Heart left ventricle (tissue), 16 donors: ENCODE measurements at regions of chr20 and their contacts with region 1.

Region 1: DNA sequence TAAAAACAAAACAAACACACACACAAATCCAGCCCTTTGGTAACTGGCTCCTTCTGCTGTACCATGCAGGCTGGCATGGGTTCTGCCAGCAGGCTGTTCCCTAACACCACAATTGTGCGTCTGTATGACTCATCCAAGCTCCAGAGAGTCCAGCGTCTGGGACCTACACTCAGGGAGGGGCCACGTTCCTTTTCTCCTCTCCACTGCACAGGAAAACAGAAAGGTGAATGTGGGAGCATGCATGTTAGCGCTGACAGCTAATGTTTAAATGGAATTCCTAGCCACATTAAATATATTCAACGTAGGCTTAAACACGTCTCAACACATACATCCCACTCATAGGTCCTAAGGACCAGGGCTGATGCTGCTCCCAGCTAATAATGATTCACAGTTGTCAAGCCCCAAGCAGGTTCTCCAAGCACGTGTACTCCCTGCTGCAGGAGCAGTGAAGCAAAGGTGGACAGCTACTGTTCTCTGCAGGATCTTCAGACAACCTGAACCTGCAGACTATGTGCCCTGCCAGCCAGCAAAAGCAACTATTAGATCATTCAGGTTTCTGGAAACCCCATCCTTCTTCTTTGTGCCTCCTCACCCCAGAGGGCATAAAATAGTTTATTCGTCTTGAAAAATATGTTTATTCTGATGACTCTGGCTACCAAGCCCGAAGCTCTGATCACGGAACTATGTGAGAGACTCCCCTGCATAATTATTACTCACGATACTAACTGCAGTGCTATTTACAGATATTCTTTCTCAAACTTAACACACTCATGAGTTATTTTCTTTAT is 20.9 kb downstream of the MAP1LC3A start:
- DNase-seq: peak in 4 of 5 donors; percentile 51 to 82 (median 68)
- ATAC-seq: peak; percentile 85 to 92 (median 92)
- H3K4me3 ChIP-seq: no peak overlapping the region
- H3K27ac ChIP-seq: peak overlapping the region; percentile 44 to 93 (median 78)
- H3K4me1 ChIP-seq: peaks cover 0 to 59% (median 22%) of the 10 kb centered on the region in 12 donors
- H3K27me3 ChIP-seq: no peaks in the 10 kb centered on the region
- CTCF ChIP-seq: peak; percentile 23 to 68 (median 54)
- POLR2A ChIP-seq: no peak

Region 2: DNA sequence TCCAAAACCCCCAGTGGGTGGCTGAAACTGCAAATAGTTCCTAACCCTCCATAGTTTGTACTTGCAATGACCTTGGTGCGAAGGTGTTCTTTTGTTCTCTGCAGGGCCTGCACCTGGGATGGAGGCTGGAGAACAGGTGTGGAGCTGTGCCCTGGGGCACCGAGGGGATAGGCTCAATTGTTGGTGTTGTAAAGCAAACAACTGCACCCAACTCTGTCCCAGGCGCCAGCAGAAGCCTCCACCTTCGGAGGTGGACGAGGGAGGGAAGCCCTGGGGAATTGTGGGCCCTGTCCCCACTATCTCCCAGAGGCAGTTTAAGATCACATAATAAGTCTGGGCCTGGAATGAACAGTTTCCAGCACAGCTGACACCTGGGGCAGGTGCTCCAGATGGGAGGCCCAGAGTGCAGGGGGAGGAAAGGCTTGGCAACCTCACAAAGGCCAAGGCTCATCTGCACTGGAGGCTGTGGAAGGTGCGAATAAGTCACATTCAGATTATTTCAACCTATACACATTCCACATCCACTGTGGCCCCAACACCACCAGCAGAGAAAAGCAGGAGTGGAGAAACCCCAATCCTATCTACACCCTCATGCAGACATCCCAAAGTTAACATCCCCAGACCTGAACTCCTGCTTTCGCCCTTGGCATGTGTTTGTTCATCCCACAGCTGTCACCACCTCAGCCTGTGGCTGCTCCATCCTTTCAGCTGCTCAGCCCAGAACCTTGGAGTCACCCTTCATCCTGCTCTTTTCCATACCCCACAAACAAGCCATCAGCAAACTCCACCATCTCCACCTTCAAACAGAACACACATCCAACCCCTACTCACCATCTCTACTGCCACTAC is 1101.8 kb before region 1 on chr20:
- intact Hi-C with region 1: no loop called
- DNase-seq: no peak
- ATAC-seq: no peak
- H3K4me3 ChIP-seq: no peak overlapping the region
- H3K27ac ChIP-seq: no peak overlapping the region
- H3K4me1 ChIP-seq: no peaks in the 10 kb centered on the region
- H3K27me3 ChIP-seq: peaks cover 0 to 6% (median 0%) of the 10 kb centered on the region in 9 donors
- CTCF ChIP-seq: no peak
- POLR2A ChIP-seq: no peak

Region 3: DNA sequence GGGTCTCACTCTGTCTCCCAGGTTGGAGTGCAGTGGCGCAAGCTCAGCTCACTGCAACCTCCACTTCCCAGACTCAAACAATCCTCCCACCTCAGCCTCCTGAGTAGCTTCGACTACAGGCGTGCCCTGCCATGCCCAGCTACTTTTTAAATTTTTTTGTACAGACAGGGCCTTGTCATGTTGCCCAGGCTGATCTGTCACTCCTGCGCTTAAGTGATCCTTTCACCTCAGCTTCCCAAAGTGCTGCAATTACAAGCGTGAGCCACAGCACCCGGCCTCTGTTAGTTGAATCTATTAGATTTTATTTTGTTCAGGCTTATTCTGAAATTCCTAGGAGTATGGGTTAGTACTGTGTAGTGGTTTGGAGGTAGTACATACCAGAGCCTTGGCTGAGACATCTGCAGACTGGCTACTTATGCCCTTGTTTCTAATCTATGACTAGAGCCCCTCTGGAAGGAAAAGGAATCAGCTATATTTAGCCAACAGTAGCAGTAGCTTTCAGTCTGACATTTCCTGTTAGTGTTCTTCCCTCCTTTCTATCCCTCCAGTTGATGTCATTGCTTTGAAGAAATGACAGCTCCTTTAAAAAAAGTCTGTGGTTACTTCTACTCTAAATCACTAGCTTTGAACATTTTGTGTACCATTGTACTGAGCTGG is 141.9 kb before region 1 on chr20:
- intact Hi-C with region 1: no loop called
- DNase-seq: no peak
- ATAC-seq: peak; percentile 66 to 93 (median 73)
- H3K4me3 ChIP-seq: no peak overlapping the region
- H3K27ac ChIP-seq: peak overlapping the region; percentile 14 to 74 (median 61)
- H3K4me1 ChIP-seq: peaks cover 0 to 32% (median 18%) of the 10 kb centered on the region in 12 donors
- H3K27me3 ChIP-seq: no peaks in the 10 kb centered on the region
- CTCF ChIP-seq: no peak
- POLR2A ChIP-seq: no peak

Region 4: GRCh38 chr20:34522969-34523871 is 56.2 kb before region 1 on chr20:
- intact Hi-C with region 1: no loop called
- DNase-seq: no peak
- ATAC-seq: peak in 3 of 4 donors; percentile 26 to 48 (median 41)
- H3K4me3 ChIP-seq: no peak overlapping the region
- H3K27ac ChIP-seq: peak overlapping the region in 7 of 12 donors; percentile 22 to 62 (median 39)
- H3K4me1 ChIP-seq: peaks cover 4 to 65% (median 50%) of the 10 kb centered on the region in 12 donors
- H3K27me3 ChIP-seq: no peaks in the 10 kb centered on the region
- CTCF ChIP-seq: peak; percentile 14 to 60 (median 42)
- POLR2A ChIP-seq: no peak

Region 5: DNA sequence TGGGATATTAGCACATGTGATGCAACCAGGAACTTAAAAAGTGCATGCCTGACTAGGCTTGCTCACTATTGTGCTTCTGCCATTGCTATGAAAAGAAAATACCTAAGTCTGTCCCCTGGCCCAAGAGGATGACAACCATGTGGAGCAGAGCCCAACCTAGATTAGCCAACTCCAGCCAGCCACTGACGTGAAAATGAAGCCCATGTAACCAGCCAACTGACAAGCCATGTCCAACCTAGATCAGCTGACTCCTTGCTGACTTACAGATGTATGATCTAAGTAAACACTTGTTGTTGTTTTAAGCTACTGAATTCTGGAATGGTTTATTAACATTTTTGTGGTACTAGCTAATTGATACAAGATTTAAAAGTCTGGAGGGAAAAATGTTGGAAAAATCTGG is 50.0 kb after region 1 on chr20:
- intact Hi-C with region 1: loop called in 1 of 10 experiments (anchors 5 kb)
- DNase-seq: peak in 4 of 5 donors; percentile 37 to 80 (median 62)
- ATAC-seq: peak; percentile 83 to 92 (median 90)
- H3K4me3 ChIP-seq: no peak overlapping the region
- H3K27ac ChIP-seq: peak overlapping the region; percentile 22 to 83 (median 58)
- H3K4me1 ChIP-seq: peaks cover 0 to 14% (median 4%) of the 10 kb centered on the region in 12 donors
- H3K27me3 ChIP-seq: no peaks in the 10 kb centered on the region
- CTCF ChIP-seq: no peak
- POLR2A ChIP-seq: no peak

Region 6: GRCh38 chr20:34744847-34745246 is 165.5 kb after region 1 on chr20:
- intact Hi-C with region 1: loop called in 5 of 10 experiments (anchors 1 to 10 kb)
- DNase-seq: peak in 4 of 5 donors; percentile 44 to 53 (median 48)
- ATAC-seq: peak; percentile 90 to 93 (median 93)
- H3K4me3 ChIP-seq: no peak overlapping the region
- H3K27ac ChIP-seq: peak overlapping the region in 10 of 12 donors; percentile 25 to 74 (median 51)
- H3K4me1 ChIP-seq: peaks cover 0 to 34% (median 9%) of the 10 kb centered on the region in 12 donors
- H3K27me3 ChIP-seq: no peaks in the 10 kb centered on the region
- CTCF ChIP-seq: no peak
- POLR2A ChIP-seq: no peak

Region 7: GRCh38 chr20:34753706-34754461 is 174.5 kb after region 1 on chr20:
- intact Hi-C with region 1: loop called in 4 of 10 experiments (anchors 5 to 10 kb)
- DNase-seq: no peak
- ATAC-seq: peak in 1 of 4 donors; percentile 34
- H3K4me3 ChIP-seq: no peak overlapping the region
- H3K27ac ChIP-seq: peak overlapping the region in 1 of 12 donors; percentile 2
- H3K4me1 ChIP-seq: no peaks in the 10 kb centered on the region
- H3K27me3 ChIP-seq: no peaks in the 10 kb centered on the region
- CTCF ChIP-seq: peak in 4 of 12 donors; percentile 8 to 22 (median 18)
- POLR2A ChIP-seq: no peak

Region 8: GRCh38 chr20:34768096-34768495 is 188.7 kb after region 1 on chr20:
- intact Hi-C with region 1: loop called in 5 of 10 experiments (anchors 1 to 10 kb)
- DNase-seq: no peak
- ATAC-seq: no peak
- H3K4me3 ChIP-seq: no peak overlapping the region
- H3K27ac ChIP-seq: no peak overlapping the region
- H3K4me1 ChIP-seq: peaks cover 0 to 10% (median 0%) of the 10 kb centered on the region in 12 donors
- H3K27me3 ChIP-seq: no peaks in the 10 kb centered on the region
- CTCF ChIP-seq: no peak
- POLR2A ChIP-seq: no peak